Activated T-helper 1 cell treated with anti-CD3 and anti-CD28 coated beads, Interleukin-12 subunit alpha, Interleukin-12 subunit beta, Interleukin-2, Interleukin-4 antibody, amounts not matched to agents 30 ng/mL and 10 ng/mL and 1 ng/mL, durations not matched to agents 14 hours and 24 hours and 36 hours (primary cell): ENCODE measurements at regions of chr7 and their contacts with region 1.

Region 1: GRCh38 chr7:111089822-111090426 is 1.0 kb upstream of the LRRN3 start:
- DNase-seq: no peak
- H3K4me3 Mint-ChIP-seq: peak overlapping the region; percentile 93
- H3K27ac Mint-ChIP-seq: no peak overlapping the region
- H3K4me1 Mint-ChIP-seq: peaks cover 85% of the 10 kb centered on the region
- H3K27me3 Mint-ChIP-seq: no peaks in the 10 kb centered on the region

Region 2: GRCh38 chr7:110891197-110891596 is 198.7 kb before region 1 on chr7:
- intact Hi-C with region 1: loop called (anchors 5 kb)
- DNase-seq: no peak
- H3K4me3 Mint-ChIP-seq: no peak overlapping the region
- H3K27ac Mint-ChIP-seq: no peak overlapping the region
- H3K4me1 Mint-ChIP-seq: peaks cover 10% of the 10 kb centered on the region
- H3K27me3 Mint-ChIP-seq: no peaks in the 10 kb centered on the region

Region 3: DNA sequence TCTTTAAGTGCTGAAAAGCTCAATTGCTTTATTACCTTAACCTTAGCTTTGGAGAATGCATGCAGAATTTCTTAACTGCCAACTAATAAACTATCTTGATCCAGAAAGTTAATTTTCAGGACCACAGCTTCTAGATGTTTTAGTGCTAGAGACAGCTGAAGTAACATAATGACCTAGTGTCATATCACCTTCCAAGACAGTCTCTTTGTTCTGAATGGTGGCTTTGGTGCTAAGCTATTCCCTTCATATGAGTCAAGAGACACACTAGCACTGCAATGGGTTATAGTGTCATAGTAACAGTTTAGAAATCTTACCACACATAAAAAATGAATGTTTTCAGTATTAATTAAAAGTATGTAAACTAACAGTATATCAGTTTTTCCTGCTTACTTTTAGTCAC is 114.4 kb before region 1 on chr7:
- intact Hi-C with region 1: no loop called
- DNase-seq: no peak
- H3K4me3 Mint-ChIP-seq: no peak overlapping the region
- H3K27ac Mint-ChIP-seq: no peak overlapping the region
- H3K4me1 Mint-ChIP-seq: peaks cover 42% of the 10 kb centered on the region
- H3K27me3 Mint-ChIP-seq: no peaks in the 10 kb centered on the region

Region 4: GRCh38 chr7:111029574-111030251 is 60.2 kb before region 1 on chr7:
- intact Hi-C with region 1: loop called (anchors 1 kb)
- DNase-seq: no peak
- H3K4me3 Mint-ChIP-seq: peak overlapping the region; percentile 68
- H3K27ac Mint-ChIP-seq: peak overlapping the region; percentile 94
- H3K4me1 Mint-ChIP-seq: peaks cover 64% of the 10 kb centered on the region
- H3K27me3 Mint-ChIP-seq: no peaks in the 10 kb centered on the region

Region 5: GRCh38 chr7:111043533-111043932 is 46.4 kb before region 1 on chr7:
- intact Hi-C with region 1: no loop called
- DNase-seq: no peak
- H3K4me3 Mint-ChIP-seq: no peak overlapping the region
- H3K27ac Mint-ChIP-seq: no peak overlapping the region
- H3K4me1 Mint-ChIP-seq: peaks cover 14% of the 10 kb centered on the region
- H3K27me3 Mint-ChIP-seq: no peaks in the 10 kb centered on the region

Region 6: GRCh38 chr7:111108496-111108895 is 18.6 kb after region 1 on chr7:
- intact Hi-C with region 1: no loop called
- DNase-seq: no peak
- H3K4me3 Mint-ChIP-seq: no peak overlapping the region
- H3K27ac Mint-ChIP-seq: peak overlapping the region; percentile 67
- H3K4me1 Mint-ChIP-seq: peaks cover 65% of the 10 kb centered on the region
- H3K27me3 Mint-ChIP-seq: no peaks in the 10 kb centered on the region

Region 7: DNA sequence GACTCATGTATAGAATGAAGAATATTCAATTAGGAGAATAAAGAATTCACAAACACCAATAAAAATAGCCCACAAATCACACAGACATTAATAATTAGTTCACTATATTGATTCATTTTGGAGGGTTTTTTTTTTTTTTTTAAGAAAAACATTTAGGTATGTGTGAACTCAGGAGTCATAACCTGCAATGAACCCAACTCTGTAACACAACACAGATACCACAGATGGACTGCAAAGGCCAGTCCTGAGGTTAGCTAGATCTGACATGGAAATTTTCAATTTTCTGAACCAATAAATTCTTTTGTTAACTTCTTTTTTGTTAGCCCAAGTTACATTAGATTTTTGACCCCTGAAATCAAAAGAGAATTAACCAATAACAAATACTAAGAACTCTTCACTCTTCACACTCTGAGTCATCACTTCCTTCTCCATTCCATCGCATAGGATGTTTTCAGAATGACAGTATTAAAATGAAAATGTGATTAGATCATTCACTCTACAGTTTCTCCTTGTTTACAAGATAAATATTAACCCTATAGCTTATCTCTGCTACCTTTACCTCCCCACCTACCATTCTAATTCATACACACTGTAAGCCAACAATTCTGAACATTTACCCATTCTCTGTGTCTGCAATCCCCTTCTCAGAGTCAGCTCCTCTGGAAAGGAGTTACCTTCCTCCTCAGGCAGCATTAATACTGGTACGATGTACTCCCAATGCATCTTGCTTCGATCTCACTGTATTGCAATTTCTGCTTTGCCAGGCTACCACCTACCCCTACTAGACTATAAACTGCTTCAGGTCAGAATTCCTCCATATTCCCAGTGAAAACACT is 142.5 kb after region 1 on chr7:
- intact Hi-C with region 1: loop called (anchors 5 kb)
- DNase-seq: no peak
- H3K4me3 Mint-ChIP-seq: no peak overlapping the region
- H3K27ac Mint-ChIP-seq: peak overlapping the region; percentile 5
- H3K4me1 Mint-ChIP-seq: peaks cover 9% of the 10 kb centered on the region
- H3K27me3 Mint-ChIP-seq: no peaks in the 10 kb centered on the region

Region 8: GRCh38 chr7:111561885-111562732 is 472.2 kb after region 1 on chr7 and contains the start of gene IMMP2L:
- intact Hi-C with region 1: loop called (anchors 5 kb)
- DNase-seq: peak; percentile 89
- H3K4me3 Mint-ChIP-seq: peak within 1 kb of the TSS; percentile 87
- H3K27ac Mint-ChIP-seq: peak within 1 kb of the TSS; percentile 89
- H3K4me1 Mint-ChIP-seq: peaks cover 37% of the 10 kb centered on the region
- H3K27me3 Mint-ChIP-seq: no peaks in the 10 kb centered on the region
- total RNA-seq, gene IMMP2L: 11.3 and 16.0 TPM in 2 replicates